HCT116 (cell line): ENCODE measurements at regions of chr11 and their contacts with region 1.

Region 1: DNA sequence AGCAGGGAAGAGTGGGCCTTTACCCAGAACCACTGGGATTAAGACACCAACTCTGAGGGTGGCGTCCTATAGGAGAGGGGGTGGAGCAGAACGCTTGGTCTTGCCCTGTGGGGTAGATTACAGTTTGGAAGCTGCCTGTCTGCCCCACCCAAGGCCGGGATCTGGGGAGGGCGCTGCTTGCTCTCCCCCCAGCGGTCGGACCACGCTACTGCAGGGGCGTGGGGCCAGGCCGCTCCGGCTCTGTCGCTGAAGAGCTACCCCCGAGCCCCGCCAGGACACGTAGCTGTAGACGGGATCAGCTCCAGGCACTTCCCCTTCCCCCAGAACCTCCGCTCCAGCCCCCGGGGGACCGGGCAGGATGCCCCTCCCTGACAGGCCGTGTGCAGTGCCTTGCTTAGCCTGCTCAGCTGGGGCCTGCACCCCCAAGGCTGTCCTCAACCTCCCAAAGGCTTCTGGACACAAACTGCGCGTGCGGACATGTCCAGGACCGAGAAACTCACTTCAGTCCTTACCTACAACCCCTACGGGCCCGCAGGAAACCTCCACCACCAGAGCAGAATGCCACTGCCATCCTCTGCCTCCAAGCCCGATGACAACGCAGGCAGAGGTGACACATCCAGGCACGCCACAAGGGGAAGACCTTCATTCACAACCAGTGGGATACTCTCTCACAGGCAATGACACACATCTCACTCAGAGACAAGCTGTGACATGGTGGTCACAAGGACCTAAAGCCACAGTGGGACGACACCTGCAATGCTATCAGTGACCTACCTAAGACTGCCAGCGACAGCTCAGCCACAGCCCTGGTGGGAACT is 3.6 kb downstream of the AHNAK start:
- DNase-seq: peak; percentile 54
- ATAC-seq: peak; percentile 47
- H3K4me3 ChIP-seq: peak overlapping the region; percentile 91 to 98
- H3K27ac ChIP-seq: peak overlapping the region; percentile 95
- H3K4me1 ChIP-seq: peaks cover 69 to 84% of the 10 kb centered on the region in 2 experiments
- H3K27me3 ChIP-seq: no peaks in the 10 kb centered on the region
- CTCF ChIP-seq: peak in 2 of 3 experiments; percentile 95 to 99; a peak in 4 of 6 replicates
- POLR2A ChIP-seq: no peak
- RAD21 ChIP-seq: no peak

Region 2: GRCh38 chr11:62383822-62384221 is 159.1 kb before region 1 on chr11:
- CTCF ChIA-PET with region 1: no interaction called
- POLR2A ChIA-PET with region 1: no interaction called
- RAD21 ChIA-PET with region 1: no interaction called
- intact Hi-C with region 1: loop called (anchors 2 kb)
- DNase-seq: no peak
- ATAC-seq: no peak
- H3K4me3 ChIP-seq: no peak overlapping the region
- H3K27ac ChIP-seq: no peak overlapping the region
- H3K4me1 ChIP-seq: peaks cover 0 to 4% of the 10 kb centered on the region in 2 experiments; a peak in 1 of 4 replicates
- H3K27me3 ChIP-seq: no peaks in the 10 kb centered on the region
- CTCF ChIP-seq: no peak
- POLR2A ChIP-seq: no peak
- RAD21 ChIP-seq: no peak

Region 3: DNA sequence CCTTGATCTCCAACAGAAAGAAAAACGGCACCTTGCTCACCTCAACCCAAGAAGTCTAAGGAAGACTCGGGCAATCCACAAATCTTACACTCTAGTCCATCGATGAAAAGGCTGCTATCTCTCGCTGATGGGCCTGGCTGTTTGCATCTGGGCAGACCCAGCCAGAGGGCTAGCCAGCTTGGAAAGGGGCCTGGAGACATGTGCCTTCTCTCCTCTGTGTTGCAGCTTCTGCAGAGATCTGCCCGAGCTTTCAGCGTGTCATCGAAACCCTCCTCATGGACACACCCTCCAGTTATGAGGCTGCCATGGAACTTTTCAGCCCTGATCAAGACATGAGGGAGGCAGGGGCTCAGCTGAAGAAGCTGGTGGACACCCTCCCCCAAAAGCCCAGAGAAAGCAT is 121.0 kb before region 1 on chr11:
- CTCF ChIA-PET with region 1: interaction called, 62 read pairs
- POLR2A ChIA-PET with region 1: interaction called, 22 read pairs
- RAD21 ChIA-PET with region 1: interaction called, 13 to 27 read pairs
- intact Hi-C with region 1: loop called (anchors 1 kb)
- DNase-seq: no peak
- ATAC-seq: no peak
- H3K4me3 ChIP-seq: no peak overlapping the region
- H3K27ac ChIP-seq: no peak overlapping the region
- H3K4me1 ChIP-seq: peaks cover 0 to 20% of the 10 kb centered on the region in 2 experiments; a peak in 2 of 4 replicates
- H3K27me3 ChIP-seq: no peaks in the 10 kb centered on the region
- CTCF ChIP-seq: no peak
- POLR2A ChIP-seq: no peak
- RAD21 ChIP-seq: no peak

Region 4: GRCh38 chr11:62487738-62488551 is 55.0 kb before region 1 on chr11:
- CTCF ChIA-PET with region 1: interaction called, 12 read pairs
- POLR2A ChIA-PET with region 1: no interaction called
- RAD21 ChIA-PET with region 1: no interaction called
- intact Hi-C with region 1: no loop called
- DNase-seq: no peak
- ATAC-seq: no peak
- H3K4me3 ChIP-seq: no peak overlapping the region
- H3K27ac ChIP-seq: no peak overlapping the region
- H3K4me1 ChIP-seq: no peaks in the 10 kb centered on the region
- H3K27me3 ChIP-seq: no peaks in the 10 kb centered on the region
- CTCF ChIP-seq: no peak
- POLR2A ChIP-seq: no peak
- RAD21 ChIP-seq: no peak

Region 5: DNA sequence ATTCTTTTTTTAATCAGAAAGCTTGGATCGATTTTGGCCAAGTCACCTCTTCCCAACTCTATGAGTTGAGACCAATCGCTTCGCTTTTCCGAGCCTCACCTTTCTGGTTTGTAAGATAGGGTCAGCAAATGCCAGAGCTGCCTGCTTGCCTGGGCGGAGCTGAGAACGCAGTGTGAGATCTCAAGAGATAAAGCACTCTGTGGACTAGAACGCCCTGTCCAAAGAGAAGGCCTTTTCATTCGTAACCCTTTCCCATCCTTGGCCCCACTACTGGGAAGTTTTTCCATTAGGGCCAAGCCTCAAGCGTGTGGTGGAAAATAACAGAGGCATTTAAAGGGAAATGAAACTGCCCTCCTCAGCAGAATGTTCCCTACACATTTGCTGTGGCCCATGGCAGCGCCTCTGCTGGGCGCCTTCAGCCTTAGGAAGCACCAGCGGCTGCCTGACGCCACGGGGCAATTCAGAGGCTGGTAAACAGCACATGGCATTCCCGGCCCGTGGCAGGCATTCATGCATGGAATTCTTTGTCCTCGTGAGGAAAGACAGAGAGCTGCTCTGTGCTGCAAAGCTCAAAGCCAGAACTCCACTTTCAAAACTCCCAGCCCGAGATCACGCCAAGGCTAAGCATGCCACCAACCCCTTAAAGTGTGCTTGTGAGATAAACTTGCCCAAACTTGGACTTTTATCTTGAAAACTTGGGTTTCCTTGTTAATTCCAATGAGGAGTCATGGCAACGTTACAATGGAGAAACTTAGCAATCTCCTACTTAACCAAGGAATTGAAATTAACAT is 34.5 kb before region 1 on chr11:
- CTCF ChIA-PET with region 1: interaction called, 16 read pairs
- POLR2A ChIA-PET with region 1: interaction called, 3 read pairs
- RAD21 ChIA-PET with region 1: interaction called in 1 of 2 experiments, 4 read pairs
- intact Hi-C with region 1: no loop called
- DNase-seq: peak; percentile 39
- ATAC-seq: peak; percentile 95
- H3K4me3 ChIP-seq: peak overlapping the region; percentile 28 to 43
- H3K27ac ChIP-seq: peak overlapping the region; percentile 37
- H3K4me1 ChIP-seq: peaks cover 11 to 28% of the 10 kb centered on the region in 2 experiments
- H3K27me3 ChIP-seq: no peaks in the 10 kb centered on the region
- CTCF ChIP-seq: peak in 2 of 3 experiments; percentile 60 to 77; a peak in 5 of 6 replicates
- POLR2A ChIP-seq: no peak
- RAD21 ChIP-seq: no peak

Region 6: GRCh38 chr11:62805076-62805892 is 262.3 kb after region 1 on chr11 and contains the start of gene NXF1:
- CTCF ChIA-PET with region 1: no interaction called
- POLR2A ChIA-PET with region 1: no interaction called
- RAD21 ChIA-PET with region 1: no interaction called
- intact Hi-C with region 1: no loop called
- DNase-seq: peak; percentile 90
- ATAC-seq: peak; percentile 91
- H3K4me3 ChIP-seq: peak within 1 kb of the TSS; percentile 68 to 79
- H3K27ac ChIP-seq: peak within 1 kb of the TSS; percentile 85
- H3K4me1 ChIP-seq: peaks cover 0 to 21% of the 10 kb centered on the region in 2 experiments; a peak in 3 of 4 replicates
- H3K27me3 ChIP-seq: no peaks in the 10 kb centered on the region
- CTCF ChIP-seq: no peak
- POLR2A ChIP-seq: peak; percentile 99
- RAD21 ChIP-seq: no peak
- total RNA-seq, gene NXF1: 55.5 TPM